CD8-positive, alpha-beta T cell (primary cell): ENCODE measurements at regions of chr4 and their contacts with region 1.

Region 1: GRCh38 chr4:19857380-19857779 is 394.3 kb upstream of the SLIT2 start:
- DNase-seq: no peak
- ATAC-seq: no peak
- H3K4me3 ChIP-seq: no peak overlapping the region
- H3K4me3 Mint-ChIP-seq: no peak overlapping the region
- H3K27ac ChIP-seq: no peak overlapping the region
- H3K27ac Mint-ChIP-seq: no peak overlapping the region
- H3K4me1 ChIP-seq: no peaks in the 10 kb centered on the region
- H3K4me1 Mint-ChIP-seq: no peaks in the 10 kb centered on the region
- H3K27me3 ChIP-seq: no peaks in the 10 kb centered on the region
- H3K27me3 Mint-ChIP-seq: no peaks in the 10 kb centered on the region
- CTCF ChIP-seq: no peak

Region 2: DNA sequence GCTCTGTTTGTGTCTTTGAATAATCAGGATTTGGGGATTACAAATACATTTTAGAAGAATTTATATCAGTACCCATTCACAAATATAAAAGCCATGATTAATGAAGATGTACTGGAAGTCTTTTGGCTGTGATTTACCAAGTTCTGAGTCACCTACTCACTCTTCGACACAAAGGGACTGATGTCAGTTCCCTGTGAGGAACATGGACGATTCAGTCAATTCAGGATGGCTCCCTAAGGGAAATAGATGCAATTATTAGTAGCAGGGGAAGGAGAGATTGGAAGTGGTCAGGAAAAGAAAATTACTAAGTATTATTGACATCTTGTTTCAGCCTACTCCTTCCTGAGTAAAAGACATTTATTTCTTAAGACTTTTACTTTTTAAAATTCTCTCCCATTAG is 156.4 kb before region 1 on chr4:
- CTCF ChIA-PET with region 1: no interaction called
- POLR2A ChIA-PET with region 1: no interaction called
- intact Hi-C with region 1: loop called in 1 of 2 experiments (anchors 5 kb)
- DNase-seq: no peak
- ATAC-seq: no peak
- H3K4me3 ChIP-seq: no peak overlapping the region
- H3K4me3 Mint-ChIP-seq: no peak overlapping the region
- H3K27ac ChIP-seq: no peak overlapping the region
- H3K27ac Mint-ChIP-seq: no peak overlapping the region
- H3K4me1 ChIP-seq: no peaks in the 10 kb centered on the region
- H3K4me1 Mint-ChIP-seq: no peaks in the 10 kb centered on the region
- H3K27me3 ChIP-seq: no peaks in the 10 kb centered on the region
- H3K27me3 Mint-ChIP-seq: no peaks in the 10 kb centered on the region
- CTCF ChIP-seq: no peak

Region 3: GRCh38 chr4:20086799-20087521 is 229.6 kb after region 1 on chr4:
- CTCF ChIA-PET with region 1: no interaction called
- POLR2A ChIA-PET with region 1: no interaction called
- intact Hi-C with region 1: no loop called
- DNase-seq: no peak
- ATAC-seq: no peak
- H3K4me3 ChIP-seq: no peak overlapping the region
- H3K4me3 Mint-ChIP-seq: no peak overlapping the region
- H3K27ac ChIP-seq: no peak overlapping the region
- H3K27ac Mint-ChIP-seq: no peak overlapping the region
- H3K4me1 ChIP-seq: no peaks in the 10 kb centered on the region
- H3K4me1 Mint-ChIP-seq: no peaks in the 10 kb centered on the region
- H3K27me3 ChIP-seq: no peaks in the 10 kb centered on the region
- H3K27me3 Mint-ChIP-seq: no peaks in the 10 kb centered on the region
- CTCF ChIP-seq: no peak